B cell (primary cell): ENCODE measurements at regions of chr16 and their contacts with region 1.

Region 1: DNA sequence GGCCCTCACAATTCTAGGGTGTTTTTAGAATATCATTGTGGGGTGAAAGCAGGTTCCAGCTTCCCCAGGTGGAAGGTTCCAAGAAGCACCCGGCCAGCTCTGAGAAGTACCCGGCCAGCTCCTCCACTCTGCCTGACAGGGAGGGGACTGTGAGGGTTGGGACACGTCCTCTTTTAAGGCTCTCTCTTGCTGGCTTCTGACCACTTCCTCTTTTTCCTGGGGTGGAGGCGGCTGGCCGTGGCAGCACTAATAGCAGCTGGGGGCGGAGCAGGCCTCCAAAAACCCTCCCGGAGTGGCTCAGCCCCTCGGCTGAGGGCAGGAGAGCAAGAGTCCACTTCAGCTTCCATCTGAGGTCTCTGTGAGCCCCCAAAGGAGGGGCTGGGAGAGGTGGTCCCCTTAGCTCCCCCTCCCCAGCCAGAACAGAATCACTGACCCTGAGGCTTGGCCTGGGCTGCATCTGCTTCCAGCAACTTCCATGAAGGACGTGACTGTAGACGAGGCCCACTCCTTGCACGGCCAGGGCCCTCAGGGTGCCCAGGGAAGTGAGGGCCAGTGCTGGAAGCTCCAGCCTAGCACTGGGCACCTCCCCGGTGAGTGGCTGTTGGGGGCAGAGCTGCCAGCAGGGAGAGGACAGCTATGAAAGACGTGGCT is 26.7 kb upstream of the PLCG2 start:
- DNase-seq: peak; percentile 87
- ATAC-seq: peak; percentile 96
- H3K4me3 ChIP-seq: peak overlapping the region in 4 of 5 experiments; percentile 6 to 58 (median 34)
- H3K4me3 Mint-ChIP-seq: peak overlapping the region; percentile 67
- H3K27ac ChIP-seq: peak overlapping the region; percentile 76 to 87
- H3K27ac Mint-ChIP-seq: peak overlapping the region; percentile 87
- H3K4me1 ChIP-seq: peaks cover 67 to 82% of the 10 kb centered on the region in 2 donors
- H3K4me1 Mint-ChIP-seq: peaks cover 67% of the 10 kb centered on the region
- H3K27me3 ChIP-seq: no peaks in the 10 kb centered on the region
- H3K27me3 Mint-ChIP-seq: no peaks in the 10 kb centered on the region
- CTCF ChIP-seq: no peak

Region 2: DNA sequence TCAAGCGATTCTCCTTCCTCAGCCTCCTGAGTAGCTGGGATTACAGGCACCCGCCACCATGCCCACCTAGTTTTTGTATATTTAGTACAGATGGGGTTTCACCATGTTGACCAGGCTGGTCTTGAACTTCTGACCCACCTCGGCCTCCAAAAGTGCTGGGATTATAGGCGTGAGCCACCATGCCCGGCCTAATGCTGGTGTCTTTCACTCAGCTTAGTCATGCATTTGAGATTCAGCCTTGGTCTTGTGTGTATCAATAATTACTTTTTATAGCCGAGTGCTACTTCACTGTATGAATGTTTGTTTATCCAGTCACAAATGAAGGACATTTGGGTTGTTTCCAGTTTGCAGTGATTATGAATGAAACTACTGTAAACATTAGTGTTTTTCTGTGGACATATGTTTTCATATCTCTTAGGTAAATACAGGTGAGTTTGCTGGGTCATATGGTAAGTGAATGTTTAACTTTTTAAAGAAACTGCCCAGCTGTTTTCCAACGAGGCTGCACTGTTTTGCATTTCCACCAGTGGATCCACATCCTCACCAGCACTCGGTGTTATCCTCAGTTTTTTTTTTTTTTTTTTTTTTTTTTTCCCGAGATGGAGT is 15.7 kb after region 1 on chr16:
- CTCF ChIA-PET with region 1: interaction called, 15 read pairs
- POLR2A ChIA-PET with region 1: interaction called, 12 read pairs
- intact Hi-C with region 1: no loop called
- DNase-seq: no peak
- ATAC-seq: no peak
- H3K4me3 ChIP-seq: no peak overlapping the region
- H3K4me3 Mint-ChIP-seq: no peak overlapping the region
- H3K27ac ChIP-seq: no peak overlapping the region
- H3K27ac Mint-ChIP-seq: no peak overlapping the region
- H3K4me1 ChIP-seq: peaks cover 34 to 48% of the 10 kb centered on the region in 2 donors
- H3K4me1 Mint-ChIP-seq: peaks cover 47% of the 10 kb centered on the region
- H3K27me3 ChIP-seq: no peaks in the 10 kb centered on the region
- H3K27me3 Mint-ChIP-seq: no peaks in the 10 kb centered on the region
- CTCF ChIP-seq: no peak